ENCODE measurements at regions of chr7 and their contacts with region 1.

Region 1: GRCh38 chr7:158847451-158847866 is 8.9 kb upstream of the DYNC2I1 start:
- DNase-seq: peak in 1 of 2 donors; percentile 7
- H3K4me3 ChIP-seq: no peak overlapping the region
- CTCF ChIP-seq: no peak
- POLR2A ChIP-seq: no peak

Region 2: DNA sequence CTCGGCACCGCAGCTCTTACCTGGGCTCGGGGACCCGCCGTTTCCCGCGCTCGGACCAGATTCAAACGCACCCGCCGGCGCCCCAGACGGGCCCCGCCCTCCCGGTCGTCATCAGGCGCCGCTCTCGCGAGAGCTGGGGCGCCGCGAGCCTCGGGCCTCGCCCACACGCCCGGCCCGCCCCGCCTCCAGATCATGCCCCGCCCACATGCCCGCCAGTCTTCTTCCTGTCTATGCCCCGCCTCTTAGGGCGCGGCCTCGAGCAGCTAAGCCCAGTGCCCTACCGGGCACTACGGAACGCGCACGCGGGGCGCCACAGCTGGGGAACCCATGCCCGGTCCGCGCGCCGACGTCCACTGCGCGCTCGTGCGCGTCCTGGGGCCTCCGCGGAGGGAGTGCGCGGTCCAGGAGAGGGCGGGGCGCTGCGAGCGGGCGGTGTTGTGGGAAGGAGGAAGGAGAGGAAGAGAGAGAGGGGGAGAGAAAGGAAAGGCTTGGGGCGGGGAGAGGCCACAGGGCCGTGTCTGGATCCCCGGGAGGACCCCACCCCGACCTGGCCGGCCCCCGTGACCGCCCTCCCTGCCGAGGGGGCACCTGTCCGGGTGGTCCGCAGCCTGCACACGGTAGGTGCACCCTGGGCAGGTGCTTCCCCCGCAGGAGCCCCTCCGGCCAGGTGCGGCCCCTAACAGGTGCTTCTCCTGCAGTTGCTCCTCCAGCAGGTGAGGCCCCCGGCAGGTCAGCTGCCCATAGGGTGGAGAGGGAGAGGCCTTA is 142.6 kb before region 1 on chr7 and contains the start of gene NCAPG2:
- intact Hi-C with region 1: loop called (anchors 10 kb)
- DNase-seq: peak; percentile 95 to 99
- H3K4me3 ChIP-seq: peak within 1 kb of the TSS; percentile 68
- CTCF ChIP-seq: no peak
- POLR2A ChIP-seq: no peak
- total RNA-seq, gene NCAPG2: 5.2 to 9.7 (median 6.1) TPM

Region 3: GRCh38 chr7:158774952-158775351 is 72.5 kb before region 1 on chr7:
- intact Hi-C with region 1: loop called (anchors 2 kb)
- DNase-seq: no peak
- H3K4me3 ChIP-seq: no peak overlapping the region
- CTCF ChIP-seq: no peak
- POLR2A ChIP-seq: no peak

Measured in lower leg skin (tissue), 4 donors.